B cell (primary cell): ENCODE measurements at regions of chr3 and their contacts with region 1.

Region 1: GRCh38 chr3:48439820-48440589 is at the starts of genes CCDC51 and TMA7:
- DNase-seq: peak; percentile 98
- ATAC-seq: peak; percentile 94
- H3K4me3 ChIP-seq: peak within 1 kb of the TSS; percentile 83 to 94 (median 91)
- H3K4me3 Mint-ChIP-seq: peak within 1 kb of the TSS; percentile 97
- H3K27ac ChIP-seq: peak within 1 kb of the TSS; percentile 85
- H3K27ac Mint-ChIP-seq: peak within 1 kb of the TSS; percentile 92
- H3K4me1 ChIP-seq: peaks cover 19 to 27% of the 10 kb centered on the region in 2 donors
- H3K4me1 Mint-ChIP-seq: peaks cover 35% of the 10 kb centered on the region
- H3K27me3 ChIP-seq: no peaks in the 10 kb centered on the region
- H3K27me3 Mint-ChIP-seq: no peaks in the 10 kb centered on the region
- CTCF ChIP-seq: peak; percentile 37
- total RNA-seq, gene CCDC51: 5.0 and 6.2 TPM in 2 replicates
- total RNA-seq, gene TMA7: 185 and 194 TPM in 2 replicates

Region 2: GRCh38 chr3:48194446-48195071 is 245.4 kb before region 1 on chr3:
- CTCF ChIA-PET with region 1: interaction called, 14 read pairs
- POLR2A ChIA-PET with region 1: no interaction called
- intact Hi-C with region 1: loop called (anchors 5 kb)
- DNase-seq: peak; percentile 62
- ATAC-seq: peak; percentile 51
- H3K4me3 ChIP-seq: no peak overlapping the region
- H3K4me3 Mint-ChIP-seq: no peak overlapping the region
- H3K27ac ChIP-seq: no peak overlapping the region
- H3K27ac Mint-ChIP-seq: no peak overlapping the region
- H3K4me1 ChIP-seq: peaks cover 5 to 7% of the 10 kb centered on the region in 2 donors
- H3K4me1 Mint-ChIP-seq: peaks cover 5% of the 10 kb centered on the region
- H3K27me3 ChIP-seq: peaks cover 0 to 2% (median 0%) of the 10 kb centered on the region in 4 experiments
- H3K27me3 Mint-ChIP-seq: no peaks in the 10 kb centered on the region
- CTCF ChIP-seq: peak; percentile 41

Region 3: DNA sequence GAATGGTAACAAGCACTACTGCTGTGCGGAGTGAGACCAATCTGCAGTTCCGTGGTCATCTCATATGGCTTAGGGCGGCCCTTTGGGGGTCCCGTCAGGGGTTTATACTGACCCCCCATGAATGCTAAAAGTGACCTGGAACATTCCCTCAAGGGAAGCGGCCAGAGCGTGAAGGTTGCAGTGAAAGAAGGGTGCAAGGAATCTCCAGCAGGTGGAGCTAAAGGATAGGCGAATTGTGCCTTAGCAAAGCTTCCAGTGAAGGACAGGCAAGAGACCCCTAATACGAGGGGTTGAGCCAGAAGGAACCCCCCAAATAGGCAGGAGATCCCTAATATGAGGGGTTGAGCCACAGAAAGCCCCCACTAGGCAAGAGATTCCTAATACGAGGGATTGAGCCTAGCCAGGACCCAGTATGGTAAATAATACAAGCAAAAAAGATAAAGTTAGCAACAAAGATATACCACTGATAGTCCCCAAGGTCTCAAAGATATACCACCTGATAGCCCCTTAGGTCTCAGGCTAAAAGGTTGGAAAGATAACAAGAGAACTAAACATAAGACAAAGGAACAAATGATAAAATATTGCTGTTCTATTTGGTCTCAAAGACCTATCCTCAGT is 166.3 kb before region 1 on chr3:
- CTCF ChIA-PET with region 1: interaction called, 148 read pairs
- POLR2A ChIA-PET with region 1: no interaction called
- intact Hi-C with region 1: loop called (anchors 1 kb)
- DNase-seq: peak; percentile 78
- ATAC-seq: peak; percentile 63
- H3K4me3 ChIP-seq: no peak overlapping the region
- H3K4me3 Mint-ChIP-seq: no peak overlapping the region
- H3K27ac ChIP-seq: no peak overlapping the region
- H3K27ac Mint-ChIP-seq: no peak overlapping the region
- H3K4me1 ChIP-seq: no peaks in the 10 kb centered on the region
- H3K4me1 Mint-ChIP-seq: no peaks in the 10 kb centered on the region
- H3K27me3 ChIP-seq: no peaks in the 10 kb centered on the region
- H3K27me3 Mint-ChIP-seq: no peaks in the 10 kb centered on the region
- CTCF ChIP-seq: peak; percentile 79

Region 4: GRCh38 chr3:48408823-48409281 is 31.2 kb before region 1 on chr3:
- CTCF ChIA-PET with region 1: interaction called, 330 read pairs
- POLR2A ChIA-PET with region 1: no interaction called
- intact Hi-C with region 1: no loop called
- DNase-seq: no peak
- ATAC-seq: no peak
- H3K4me3 ChIP-seq: no peak overlapping the region
- H3K4me3 Mint-ChIP-seq: no peak overlapping the region
- H3K27ac ChIP-seq: no peak overlapping the region
- H3K27ac Mint-ChIP-seq: no peak overlapping the region
- H3K4me1 ChIP-seq: no peaks in the 10 kb centered on the region
- H3K4me1 Mint-ChIP-seq: no peaks in the 10 kb centered on the region
- H3K27me3 ChIP-seq: no peaks in the 10 kb centered on the region
- H3K27me3 Mint-ChIP-seq: no peaks in the 10 kb centered on the region
- CTCF ChIP-seq: no peak

Region 5: GRCh38 chr3:48465531-48466378 is 25.8 kb after region 1 on chr3:
- CTCF ChIA-PET with region 1: interaction called, 13 read pairs
- POLR2A ChIA-PET with region 1: interaction called, 7 read pairs
- intact Hi-C with region 1: no loop called
- DNase-seq: peak; percentile 91
- ATAC-seq: peak; percentile 93
- H3K4me3 ChIP-seq: peak overlapping the region; percentile 31 to 92 (median 88)
- H3K4me3 Mint-ChIP-seq: peak overlapping the region; percentile 94
- H3K27ac ChIP-seq: peak overlapping the region; percentile 96 to 99
- H3K27ac Mint-ChIP-seq: peak overlapping the region; percentile 94
- H3K4me1 ChIP-seq: peaks cover 50 to 53% of the 10 kb centered on the region in 2 donors
- H3K4me1 Mint-ChIP-seq: peaks cover 52% of the 10 kb centered on the region
- H3K27me3 ChIP-seq: no peaks in the 10 kb centered on the region
- H3K27me3 Mint-ChIP-seq: no peaks in the 10 kb centered on the region
- CTCF ChIP-seq: peak; percentile 24

Region 6: DNA sequence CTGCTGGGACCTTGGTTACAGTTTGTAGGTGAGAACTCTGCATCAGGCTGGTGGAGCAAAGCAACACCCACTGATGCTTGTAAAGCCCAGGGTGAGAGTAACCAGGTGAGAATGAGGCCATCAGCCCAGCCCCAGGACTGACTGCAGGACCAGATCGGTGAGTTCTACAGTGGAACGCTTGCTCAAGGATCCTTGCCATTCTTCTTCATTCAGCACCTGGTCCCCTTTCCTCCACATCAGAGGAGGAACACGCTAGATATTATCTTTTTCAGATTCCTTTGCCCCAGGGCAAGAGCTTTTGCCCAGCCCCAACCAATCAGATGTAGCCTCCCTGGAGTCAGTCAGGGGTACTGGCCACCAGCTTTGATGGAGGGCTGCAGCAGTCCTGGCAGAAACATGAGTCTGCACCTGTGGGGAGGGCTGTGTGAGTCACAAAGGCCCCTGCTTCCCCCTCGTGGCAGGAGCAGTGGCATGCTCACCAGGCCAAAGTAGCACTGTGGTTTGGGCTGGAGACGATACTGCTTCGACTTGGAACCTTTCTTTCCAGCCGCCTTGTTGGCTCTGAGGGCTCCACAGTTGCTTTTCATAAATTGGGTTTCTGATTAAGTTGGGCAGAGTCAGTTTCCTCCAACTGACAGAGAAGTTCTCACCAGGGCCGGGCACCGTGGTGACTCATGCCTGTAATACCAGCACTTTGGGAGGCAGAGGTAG is 67.5 kb after region 1 on chr3:
- CTCF ChIA-PET with region 1: interaction called, 51 read pairs
- POLR2A ChIA-PET with region 1: no interaction called
- intact Hi-C with region 1: loop called (anchors 1 kb)
- DNase-seq: peak; percentile 83
- ATAC-seq: peak; percentile 87
- H3K4me3 ChIP-seq: no peak overlapping the region
- H3K4me3 Mint-ChIP-seq: peak overlapping the region; percentile 32
- H3K27ac ChIP-seq: no peak overlapping the region
- H3K27ac Mint-ChIP-seq: peak overlapping the region; percentile 65
- H3K4me1 ChIP-seq: peaks cover 14 to 25% of the 10 kb centered on the region in 2 donors
- H3K4me1 Mint-ChIP-seq: peaks cover 23% of the 10 kb centered on the region
- H3K27me3 ChIP-seq: peaks cover 0 to 2% (median 0%) of the 10 kb centered on the region in 4 experiments
- H3K27me3 Mint-ChIP-seq: peaks cover 3% of the 10 kb centered on the region
- CTCF ChIP-seq: peak; percentile 84

Region 7: GRCh38 chr3:48708481-48708889 is 268.5 kb after region 1 on chr3:
- CTCF ChIA-PET with region 1: no interaction called
- POLR2A ChIA-PET with region 1: no interaction called
- intact Hi-C with region 1: no loop called
- DNase-seq: no peak
- ATAC-seq: no peak
- H3K4me3 ChIP-seq: no peak overlapping the region
- H3K4me3 Mint-ChIP-seq: no peak overlapping the region
- H3K27ac ChIP-seq: peak overlapping the region in 1 of 2 donors; percentile 28
- H3K27ac Mint-ChIP-seq: no peak overlapping the region
- H3K4me1 ChIP-seq: peaks cover 9 to 10% of the 10 kb centered on the region in 2 donors
- H3K4me1 Mint-ChIP-seq: peaks cover 39% of the 10 kb centered on the region
- H3K27me3 ChIP-seq: no peaks in the 10 kb centered on the region
- H3K27me3 Mint-ChIP-seq: no peaks in the 10 kb centered on the region
- CTCF ChIP-seq: no peak